Activated CD8-positive, alpha-beta memory T cell treated with anti-CD3 and anti-CD28 coated beads, Interleukin-2, amount 10 ng/mL, durations not matched to agents 7 days and 5 days (primary cell): ENCODE measurements at regions of chr6 and their contacts with region 1.

Region 1: GRCh38 chr6:63598049-63599036 is 26.1 kb downstream of the LOC128125822 start:
- DNase-seq: peak; percentile 84
- ATAC-seq: peak; percentile 100
- H3K4me3 Mint-ChIP-seq: peak overlapping the region; percentile 73
- H3K27ac Mint-ChIP-seq: peak overlapping the region; percentile 55
- H3K4me1 Mint-ChIP-seq: peaks cover 21% of the 10 kb centered on the region
- H3K27me3 Mint-ChIP-seq: peaks cover 3% of the 10 kb centered on the region

Region 2: DNA sequence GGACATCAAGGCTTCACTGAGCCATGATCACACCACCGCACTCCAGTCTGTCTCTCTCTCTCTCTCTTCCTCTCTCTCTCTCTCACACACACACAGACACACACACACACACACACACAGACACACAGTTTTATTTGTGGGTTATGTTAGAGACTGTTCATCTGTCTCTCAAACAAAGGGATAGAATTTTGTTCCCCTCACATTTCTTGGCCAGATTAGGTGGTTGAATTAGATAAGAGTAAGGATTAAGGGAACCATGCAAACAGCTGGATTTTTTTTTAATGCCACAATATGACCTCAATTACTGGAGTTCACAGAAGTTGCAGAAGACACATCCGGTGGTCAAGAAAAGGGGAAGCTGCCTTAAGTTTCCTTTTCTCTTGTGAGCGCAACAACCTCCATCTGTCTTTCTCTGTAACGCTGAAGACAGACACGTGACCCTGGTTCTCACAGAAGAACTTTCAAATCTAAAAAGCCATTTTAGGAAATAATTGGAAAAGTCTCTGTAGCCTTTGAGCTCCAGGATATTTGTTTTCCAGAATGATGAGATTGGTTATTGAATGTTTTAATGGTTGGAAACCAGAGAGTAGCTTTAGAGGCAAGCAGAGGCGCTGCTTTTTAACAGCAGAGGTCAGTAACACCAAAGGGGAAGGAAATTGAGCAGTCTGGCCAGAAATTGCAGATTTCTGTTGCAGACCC is 245.6 kb before region 1 on chr6:
- CTCF ChIA-PET with region 1: interaction called, 35 read pairs
- DNase-seq: peak; percentile 69
- ATAC-seq: peak; percentile 72
- H3K4me3 Mint-ChIP-seq: peak overlapping the region; percentile 71
- H3K27ac Mint-ChIP-seq: peak overlapping the region; percentile 84
- H3K4me1 Mint-ChIP-seq: peaks cover 20% of the 10 kb centered on the region
- H3K27me3 Mint-ChIP-seq: peaks cover 30% of the 10 kb centered on the region

Region 3: GRCh38 chr6:63573140-63573898 is 25.0 kb before region 1 on chr6:
- CTCF ChIA-PET with region 1: interaction called, 18 read pairs
- DNase-seq: peak; percentile 83
- ATAC-seq: peak; percentile 46
- H3K4me3 Mint-ChIP-seq: peak overlapping the region; percentile 96
- H3K27ac Mint-ChIP-seq: peak overlapping the region; percentile 97
- H3K4me1 Mint-ChIP-seq: peaks cover 35% of the 10 kb centered on the region
- H3K27me3 Mint-ChIP-seq: no peaks in the 10 kb centered on the region

Region 4: DNA sequence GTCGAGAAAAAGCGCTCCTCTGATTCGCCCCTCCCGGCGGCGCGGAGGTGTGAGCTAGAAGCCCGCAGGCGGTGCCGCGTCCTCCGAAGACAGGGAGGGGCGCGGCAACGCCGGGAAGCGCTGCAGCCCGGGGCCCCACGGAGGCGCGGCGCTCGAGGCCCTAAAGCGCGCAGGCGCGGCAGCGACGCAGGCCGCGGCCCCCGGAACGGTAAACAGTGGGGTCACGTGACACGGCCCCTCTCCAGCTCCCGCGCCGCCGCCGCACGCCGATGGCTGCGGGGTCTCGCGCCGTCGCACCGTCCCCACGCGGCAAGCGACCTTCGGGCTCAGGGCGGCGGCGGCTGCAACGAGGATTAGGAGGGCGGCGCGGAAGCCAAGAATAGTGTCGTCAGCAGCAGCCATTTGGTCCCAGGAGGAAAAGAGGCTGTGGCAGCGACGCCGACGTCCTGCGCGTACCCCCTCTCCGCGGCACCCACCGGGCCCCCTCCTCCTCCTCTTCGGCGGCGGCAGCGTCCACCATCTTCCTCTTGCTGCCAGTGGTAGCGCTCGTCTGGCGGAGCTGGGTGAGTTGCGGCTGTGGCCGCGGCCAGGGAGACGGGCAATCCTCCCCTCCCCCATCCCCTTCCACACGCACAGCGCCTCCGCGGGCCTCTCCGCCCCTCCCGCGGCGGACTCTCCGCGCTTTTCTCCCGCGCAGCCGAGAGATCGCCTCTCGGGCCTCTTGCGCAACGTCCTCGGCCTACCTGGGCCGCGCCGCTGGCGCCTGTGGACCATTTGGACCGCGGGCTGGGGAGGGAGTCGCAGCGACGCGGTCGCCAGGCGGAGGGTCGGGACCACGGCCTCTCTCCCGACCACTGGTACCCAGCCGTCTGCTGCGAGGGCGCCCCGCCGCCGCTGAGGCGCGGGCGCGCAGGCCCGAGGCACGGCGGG is 37.5 kb after region 1 on chr6 and contains the start of gene PHF3:
- CTCF ChIA-PET with region 1: interaction called, 21 read pairs
- DNase-seq: peak; percentile 92
- ATAC-seq: peak; percentile 95
- H3K4me3 Mint-ChIP-seq: peak within 1 kb of the TSS; percentile 93
- H3K27ac Mint-ChIP-seq: peak within 1 kb of the TSS; percentile 94
- H3K4me1 Mint-ChIP-seq: peaks cover 43% of the 10 kb centered on the region
- H3K27me3 Mint-ChIP-seq: no peaks in the 10 kb centered on the region
- total RNA-seq, gene PHF3: 48.1 to 48.2 TPM

Region 5: DNA sequence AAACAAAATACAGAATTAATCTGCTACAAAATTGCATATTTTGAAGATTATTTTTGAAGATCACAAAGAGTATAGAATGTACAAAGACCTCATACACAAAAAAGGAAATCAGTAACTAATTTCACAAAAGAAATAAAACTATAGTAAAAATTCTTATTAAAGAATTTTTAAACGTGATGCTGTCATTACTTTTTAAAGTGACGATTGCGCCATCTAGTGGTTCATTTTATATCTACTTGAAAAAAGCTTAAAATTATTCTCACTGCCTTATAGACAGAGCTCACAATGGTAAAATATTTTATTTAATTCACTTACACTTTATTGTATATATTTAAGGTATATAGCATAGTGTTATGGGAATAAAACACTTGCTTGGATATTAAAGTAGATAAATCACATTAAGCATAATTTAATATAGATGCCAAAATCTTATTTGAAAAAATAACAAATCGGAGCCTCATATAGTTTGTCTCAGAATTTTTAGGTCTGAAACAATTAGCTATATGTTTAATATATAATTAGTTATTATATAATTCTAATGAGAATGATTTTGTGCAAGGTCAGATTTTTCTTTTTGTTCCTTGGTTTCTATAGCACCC is 166.1 kb after region 1 on chr6:
- CTCF ChIA-PET with region 1: interaction called, 67 read pairs
- DNase-seq: no peak
- ATAC-seq: no peak
- H3K4me3 Mint-ChIP-seq: no peak overlapping the region
- H3K27ac Mint-ChIP-seq: no peak overlapping the region
- H3K4me1 Mint-ChIP-seq: no peaks in the 10 kb centered on the region
- H3K27me3 Mint-ChIP-seq: peaks cover 25% of the 10 kb centered on the region

Region 6: DNA sequence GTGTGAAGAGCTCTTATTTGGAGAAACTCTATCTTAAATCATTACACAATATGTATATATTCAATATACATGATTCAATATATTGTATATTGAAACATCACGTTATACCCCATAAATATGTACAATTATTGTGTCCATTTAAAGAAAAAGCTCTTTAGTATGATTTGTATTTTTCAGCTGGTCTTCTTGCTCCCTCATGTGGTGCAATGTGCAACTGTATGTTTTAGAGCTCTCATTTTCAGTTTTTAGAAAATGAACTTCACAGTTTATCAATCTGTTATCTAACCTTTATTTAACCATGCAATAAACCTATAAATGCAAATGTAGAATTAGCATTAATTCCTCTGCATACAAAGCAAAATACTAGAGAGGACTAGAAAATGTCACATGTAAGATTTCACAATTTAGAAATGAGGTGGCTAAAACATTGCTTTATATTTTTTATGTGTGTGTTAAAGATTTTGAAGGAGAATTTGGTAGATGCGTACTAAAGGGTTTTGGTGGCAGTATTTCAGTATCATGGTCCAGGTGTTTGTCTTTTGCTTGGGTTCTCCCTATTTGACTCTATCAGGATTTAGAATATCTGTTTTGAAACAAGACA is 204.4 kb after region 1 on chr6:
- CTCF ChIA-PET with region 1: interaction called, 13 read pairs
- DNase-seq: no peak
- ATAC-seq: no peak
- H3K4me3 Mint-ChIP-seq: no peak overlapping the region
- H3K27ac Mint-ChIP-seq: no peak overlapping the region
- H3K4me1 Mint-ChIP-seq: peaks cover 7% of the 10 kb centered on the region
- H3K27me3 Mint-ChIP-seq: peaks cover 5% of the 10 kb centered on the region